ENCODE measurements at regions of chr17 and their contacts with region 1.

Region 1: GRCh38 chr17:40531051-40531991 is 29.9 kb upstream of the TNS4 start:
- DNase-seq: no peak
- H3K4me3 ChIP-seq: no peak overlapping the region
- H3K27ac ChIP-seq: no peak overlapping the region
- H3K27me3 ChIP-seq: no peaks in the 10 kb centered on the region
- CTCF ChIP-seq: no peak

Region 2: GRCh38 chr17:40362696-40363110 is 168.6 kb before region 1 on chr17:
- CTCF ChIA-PET with region 1: interaction called, 20 read pairs
- POLR2A ChIA-PET with region 1: interaction called, 3 read pairs
- DNase-seq: no peak
- H3K4me3 ChIP-seq: peak overlapping the region; percentile 59
- H3K27ac ChIP-seq: no peak overlapping the region
- H3K27me3 ChIP-seq: no peaks in the 10 kb centered on the region
- CTCF ChIP-seq: peak; percentile 70

Region 3: DNA sequence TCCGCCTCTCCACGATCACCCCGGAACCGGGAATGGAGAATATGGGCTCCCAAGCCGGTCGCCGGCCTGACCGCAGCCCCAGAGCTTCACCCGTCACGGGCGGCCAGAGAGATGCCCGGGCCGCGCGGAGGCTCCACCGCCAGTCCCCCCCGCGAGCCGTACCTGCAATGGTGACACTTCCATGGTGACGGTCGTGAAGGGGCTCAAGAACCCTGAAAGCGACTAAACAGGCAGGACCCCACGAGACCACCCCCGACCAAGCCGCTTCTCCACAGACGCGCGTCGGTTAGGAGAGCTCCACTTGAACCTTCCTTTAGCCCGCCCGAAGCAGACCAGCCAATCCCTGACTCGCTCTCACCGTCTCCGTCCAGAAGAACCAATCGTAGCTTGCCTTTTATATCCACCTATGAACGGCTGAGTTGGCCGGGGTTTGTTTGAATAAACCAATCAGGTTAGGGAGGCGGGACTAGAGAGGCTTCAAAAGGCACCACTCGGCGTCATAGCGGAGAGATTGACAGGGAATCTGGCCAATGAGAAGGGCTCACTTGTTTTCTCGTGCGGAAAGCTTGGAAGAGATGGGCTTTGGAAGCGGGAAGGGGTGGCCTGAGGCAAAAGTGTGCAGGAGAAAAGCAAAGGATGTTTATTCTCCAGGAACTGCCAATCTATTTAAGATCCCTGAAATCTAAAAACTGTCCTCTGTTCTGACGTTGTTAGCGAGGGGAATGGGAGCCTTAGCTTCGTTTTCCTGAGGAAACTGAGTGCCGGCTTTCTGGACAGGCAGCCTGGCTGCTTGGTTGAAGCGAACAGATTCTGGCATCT is 113.5 kb before region 1 on chr17 and contains the start of gene TOP2A:
- CTCF ChIA-PET with region 1: interaction called, 18 read pairs
- POLR2A ChIA-PET with region 1: interaction called, 12 read pairs
- DNase-seq: peak; percentile 100
- H3K4me3 ChIP-seq: peak within 1 kb of the TSS; percentile 82
- H3K27ac ChIP-seq: peak within 1 kb of the TSS; percentile 31
- H3K27me3 ChIP-seq: no peaks in the 10 kb centered on the region
- CTCF ChIP-seq: no peak
- polyA plus RNA-seq, gene TOP2A: 28.2 and 53.5 TPM in 2 replicates

Region 4: DNA sequence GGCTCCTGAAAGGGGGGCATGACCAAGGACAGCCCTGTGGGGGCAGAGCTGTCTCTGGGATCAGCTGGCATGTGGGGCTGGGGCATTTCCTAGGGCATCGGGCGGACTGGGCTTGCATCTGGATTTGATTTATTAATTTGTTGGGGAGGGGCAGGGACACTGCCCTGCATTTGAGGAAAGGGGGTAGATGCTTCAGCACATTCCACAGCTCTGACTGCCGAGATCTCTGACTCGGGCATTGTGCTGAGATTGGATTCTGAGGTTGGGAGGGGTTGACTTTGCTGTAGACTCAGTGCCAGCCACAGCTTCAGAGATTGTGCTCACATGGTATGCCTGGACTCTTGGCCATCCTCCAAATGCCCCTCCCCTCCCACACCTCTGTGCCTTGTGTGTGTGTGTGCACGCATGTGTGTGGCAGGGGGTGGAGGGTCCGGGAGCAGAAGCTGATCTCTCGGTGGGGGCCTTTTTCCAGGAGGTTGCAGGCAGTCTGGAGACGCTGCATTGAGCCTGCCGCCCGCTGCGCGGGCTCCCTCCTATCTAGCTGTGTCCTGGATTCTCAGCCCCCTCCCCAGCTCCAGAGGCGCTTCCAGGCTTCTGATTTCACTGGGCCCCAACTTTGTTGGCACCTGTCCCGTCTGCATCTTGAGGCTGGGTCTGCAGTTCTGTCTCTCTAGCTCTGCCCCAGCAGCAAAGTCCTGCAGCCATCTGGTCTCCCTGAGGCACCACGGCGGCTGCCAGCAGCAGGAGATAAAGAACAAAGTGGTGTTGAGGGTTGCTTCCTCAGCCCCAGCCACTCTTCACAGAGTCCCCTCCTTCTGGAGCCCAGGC is 73.1 kb before region 1 on chr17:
- CTCF ChIA-PET with region 1: interaction called, 9 read pairs
- POLR2A ChIA-PET with region 1: interaction called, 52 read pairs
- DNase-seq: peak; percentile 67
- H3K4me3 ChIP-seq: no peak overlapping the region
- H3K27ac ChIP-seq: peak overlapping the region; percentile 71
- H3K27me3 ChIP-seq: no peaks in the 10 kb centered on the region
- CTCF ChIP-seq: no peak

Region 5: DNA sequence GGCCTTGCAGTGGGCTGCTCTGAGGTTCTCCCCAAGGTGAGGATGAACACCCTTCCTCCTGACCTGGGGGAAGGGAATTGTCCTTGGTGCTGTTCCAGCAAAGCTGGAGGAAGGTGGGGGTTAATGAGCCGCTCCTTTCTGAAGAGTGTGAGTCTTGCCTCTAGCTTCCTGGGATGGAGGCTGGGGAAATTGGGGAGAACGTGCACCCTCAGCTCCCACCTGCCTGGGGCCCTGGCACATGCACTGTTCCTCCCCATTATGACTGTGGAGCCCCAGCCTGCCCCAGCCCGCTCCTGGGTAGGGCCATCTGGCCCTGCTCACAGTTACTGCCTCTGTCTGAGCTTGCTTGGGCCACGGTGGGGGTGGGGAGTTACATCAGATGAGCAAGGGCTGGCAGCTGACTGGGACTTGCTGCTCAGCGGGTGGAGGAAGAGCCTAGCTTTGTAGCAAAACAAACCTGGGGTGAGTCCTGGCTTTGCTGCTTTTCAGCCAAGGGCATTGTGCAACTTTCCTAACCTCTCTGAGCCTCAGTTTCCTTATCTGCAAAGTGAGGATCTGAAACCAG is 41.0 kb before region 1 on chr17:
- CTCF ChIA-PET with region 1: interaction called, 7 read pairs
- POLR2A ChIA-PET with region 1: interaction called, 15 read pairs
- DNase-seq: peak; percentile 59
- H3K4me3 ChIP-seq: no peak overlapping the region
- H3K27ac ChIP-seq: peak overlapping the region; percentile 57
- H3K27me3 ChIP-seq: no peaks in the 10 kb centered on the region
- CTCF ChIP-seq: no peak

Region 6: DNA sequence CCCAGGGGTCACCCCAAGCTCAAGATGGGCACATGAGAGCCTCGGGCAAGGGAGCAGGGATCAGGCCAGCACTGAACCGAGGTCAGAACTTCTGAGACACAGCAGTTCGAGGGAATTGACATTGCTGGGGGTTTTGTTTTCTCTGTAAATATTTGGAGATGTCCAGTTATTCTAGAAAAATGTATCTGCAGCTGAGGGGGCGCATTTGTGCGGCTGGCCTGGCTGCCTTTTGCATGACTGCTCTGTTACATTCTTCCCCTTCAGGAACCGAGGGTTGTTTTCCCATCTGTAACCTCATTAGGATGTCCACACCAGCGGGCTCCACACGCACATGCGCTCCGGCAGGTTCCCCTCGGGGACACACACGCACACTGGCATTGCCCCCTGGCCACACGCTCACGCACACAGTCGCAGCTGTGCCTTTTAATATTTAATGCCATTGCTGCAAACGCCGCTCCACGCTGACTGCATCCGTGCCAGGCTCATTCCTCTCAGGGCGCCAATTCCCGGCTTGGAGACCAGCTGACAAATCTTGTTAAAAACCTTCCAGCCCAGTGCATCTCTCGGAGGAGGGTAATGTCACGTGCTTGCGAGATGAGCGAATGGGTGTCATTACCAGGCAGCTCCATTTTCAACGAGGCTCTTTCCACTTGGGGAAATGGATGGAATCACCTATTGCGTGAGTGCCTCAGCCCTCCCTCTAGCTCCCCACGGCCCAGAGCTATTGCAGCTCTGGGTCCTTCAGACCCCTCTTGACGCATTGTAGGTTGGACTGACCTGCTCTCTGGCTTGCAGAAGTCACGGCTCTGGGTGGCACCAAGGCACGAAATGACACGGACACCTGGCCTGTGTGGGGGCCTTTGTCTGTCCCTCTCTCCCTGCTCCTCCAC is 20.8 kb after region 1 on chr17:
- CTCF ChIA-PET with region 1: interaction called, 174 read pairs
- POLR2A ChIA-PET with region 1: interaction called, 64 read pairs
- DNase-seq: peak; percentile 95
- H3K4me3 ChIP-seq: peak overlapping the region; percentile 38; the same call in 1 of the 2 replicates
- H3K27ac ChIP-seq: peak overlapping the region; percentile 100
- H3K27me3 ChIP-seq: no peaks in the 10 kb centered on the region
- CTCF ChIP-seq: no peak